ENCODE measurements at regions of chrX and their contacts with region 1.

Region 1: GRCh38 chrX:131633285-131633917 is 89.5 kb downstream of the OR13H1 start:
- DNase-seq: no peak
- ATAC-seq: no peak

Region 2: GRCh38 chrX:130975947-130976346 is 657.5 kb before region 1 on chrX:
- intact Hi-C with region 1: loop called (anchors 10 kb)
- DNase-seq: no peak
- ATAC-seq: no peak